ENCODE measurements at regions of chr1 and their contacts with region 1.

Region 1: DNA sequence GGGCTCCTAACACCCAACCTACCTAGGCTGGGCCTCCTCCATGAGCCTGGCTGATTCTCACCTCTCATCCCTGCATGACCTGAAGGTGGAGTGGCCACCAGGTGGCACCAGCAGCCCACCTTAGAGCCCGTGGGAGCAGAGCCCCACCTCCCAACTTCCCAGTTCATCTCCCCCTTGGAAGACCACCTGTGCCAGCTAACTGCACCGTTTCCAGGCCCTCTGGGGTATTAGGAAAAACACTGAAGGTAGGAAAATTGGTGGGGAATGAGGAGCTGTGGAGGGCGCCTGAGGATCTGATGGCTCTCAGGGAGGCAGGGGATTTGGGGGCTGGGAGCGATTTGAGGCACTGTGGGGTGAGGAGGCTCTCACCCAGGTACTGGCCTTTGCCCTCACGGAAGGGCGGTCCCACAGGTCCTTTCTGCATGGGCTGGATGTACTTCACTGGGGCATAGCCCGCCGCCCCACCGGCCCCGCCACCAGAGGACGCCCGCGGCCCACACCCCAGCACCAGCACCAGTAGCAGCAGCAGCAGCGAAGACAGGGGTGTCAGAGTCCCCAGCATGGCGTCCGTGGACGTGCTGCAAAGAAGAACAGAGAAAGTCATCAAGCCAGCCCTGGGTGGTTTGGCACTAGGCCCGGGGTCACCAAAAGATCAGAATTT is 11.1 kb downstream of the ADPRS start:
- DNase-seq: peak; percentile 67
- ATAC-seq: peak; percentile 86
- H3K4me3 Mint-ChIP-seq: no peak overlapping the region
- H3K27ac Mint-ChIP-seq: no peak overlapping the region
- H3K4me1 Mint-ChIP-seq: peaks cover 3% of the 10 kb centered on the region
- H3K27me3 Mint-ChIP-seq: no peaks in the 10 kb centered on the region
- CTCF ChIP-seq: no peak

Region 2: DNA sequence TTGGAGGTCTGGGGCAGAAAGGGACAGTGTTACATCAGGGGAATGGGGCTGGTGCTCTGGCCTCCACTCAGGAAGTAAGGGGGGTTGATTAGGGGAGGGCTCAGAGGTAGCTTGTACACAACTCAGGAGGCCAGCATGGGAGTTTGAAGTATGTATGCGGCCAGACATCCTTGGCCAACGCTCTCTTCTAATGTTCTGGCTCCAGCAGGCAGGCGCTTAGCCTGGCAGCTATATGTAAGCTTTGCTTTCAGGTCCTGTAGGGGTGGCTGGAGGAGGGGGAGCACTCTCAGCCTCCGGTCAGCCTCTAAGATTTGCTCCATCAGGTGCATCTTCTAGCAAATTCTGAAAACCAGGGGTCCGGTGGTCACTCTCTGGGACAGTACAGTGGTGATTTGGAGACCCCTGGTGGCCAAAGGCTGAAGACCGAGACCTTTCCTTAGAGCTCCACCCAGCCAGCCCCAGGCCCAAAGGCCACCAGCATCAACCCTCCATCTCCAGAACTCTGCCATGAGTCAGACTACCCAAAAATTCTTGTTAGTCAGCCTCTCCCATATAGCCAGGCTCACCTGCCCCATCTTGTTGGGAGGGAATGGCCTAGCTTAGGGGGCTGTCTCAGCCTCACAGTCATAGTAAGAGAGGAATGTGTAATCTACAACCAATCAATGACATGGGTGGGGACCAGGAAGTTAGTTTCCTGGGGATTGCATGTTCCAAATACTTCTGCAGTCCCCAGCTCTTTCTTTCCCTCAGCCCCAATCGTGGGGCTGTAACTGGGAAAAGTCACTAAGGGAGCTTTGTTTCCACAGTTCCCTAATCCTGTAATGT is 34.9 kb after region 1 on chr1:
- CTCF ChIA-PET with region 1: interaction called, 38 read pairs
- POLR2A ChIA-PET with region 1: no interaction called
- intact Hi-C with region 1: loop called (anchors 1 kb)
- DNase-seq: no peak
- ATAC-seq: peak; percentile 67
- H3K4me3 Mint-ChIP-seq: no peak overlapping the region
- H3K27ac Mint-ChIP-seq: no peak overlapping the region
- H3K4me1 Mint-ChIP-seq: no peaks in the 10 kb centered on the region
- H3K27me3 Mint-ChIP-seq: no peaks in the 10 kb centered on the region
- CTCF ChIP-seq: no peak

Region 3: GRCh38 chr1:36187800-36188593 is 88.2 kb after region 1 on chr1:
- CTCF ChIA-PET with region 1: interaction called, 13 read pairs
- POLR2A ChIA-PET with region 1: no interaction called
- intact Hi-C with region 1: loop called (anchors 1 kb)
- DNase-seq: peak; percentile 58
- ATAC-seq: peak; percentile 99
- H3K4me3 Mint-ChIP-seq: no peak overlapping the region
- H3K27ac Mint-ChIP-seq: no peak overlapping the region
- H3K4me1 Mint-ChIP-seq: peaks cover 3% of the 10 kb centered on the region
- H3K27me3 Mint-ChIP-seq: no peaks in the 10 kb centered on the region
- CTCF ChIP-seq: no peak

Region 4: DNA sequence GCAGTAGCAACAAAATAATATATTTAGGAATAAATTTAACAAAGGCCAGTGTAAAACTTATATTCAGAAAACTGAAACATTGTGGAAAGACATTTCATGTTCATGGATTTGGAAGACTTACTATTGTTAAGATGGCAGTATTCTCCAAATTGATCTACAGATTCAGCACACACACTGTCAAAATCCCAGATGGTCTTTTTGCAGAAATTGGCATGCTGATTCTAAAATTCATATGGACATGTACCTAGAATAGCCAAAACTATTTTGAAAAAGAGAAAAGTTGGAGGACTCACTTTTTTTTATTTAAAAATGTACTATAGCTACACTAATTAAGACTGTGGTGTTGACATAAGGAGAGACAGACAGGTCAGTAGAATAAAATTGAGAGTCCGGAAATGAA is 174.4 kb after region 1 on chr1:
- CTCF ChIA-PET with region 1: no interaction called
- POLR2A ChIA-PET with region 1: interaction called, 13 read pairs
- intact Hi-C with region 1: no loop called
- DNase-seq: no peak
- ATAC-seq: no peak
- H3K4me3 Mint-ChIP-seq: no peak overlapping the region
- H3K27ac Mint-ChIP-seq: no peak overlapping the region
- H3K4me1 Mint-ChIP-seq: peaks cover 15% of the 10 kb centered on the region
- H3K27me3 Mint-ChIP-seq: no peaks in the 10 kb centered on the region
- CTCF ChIP-seq: no peak

Region 5: DNA sequence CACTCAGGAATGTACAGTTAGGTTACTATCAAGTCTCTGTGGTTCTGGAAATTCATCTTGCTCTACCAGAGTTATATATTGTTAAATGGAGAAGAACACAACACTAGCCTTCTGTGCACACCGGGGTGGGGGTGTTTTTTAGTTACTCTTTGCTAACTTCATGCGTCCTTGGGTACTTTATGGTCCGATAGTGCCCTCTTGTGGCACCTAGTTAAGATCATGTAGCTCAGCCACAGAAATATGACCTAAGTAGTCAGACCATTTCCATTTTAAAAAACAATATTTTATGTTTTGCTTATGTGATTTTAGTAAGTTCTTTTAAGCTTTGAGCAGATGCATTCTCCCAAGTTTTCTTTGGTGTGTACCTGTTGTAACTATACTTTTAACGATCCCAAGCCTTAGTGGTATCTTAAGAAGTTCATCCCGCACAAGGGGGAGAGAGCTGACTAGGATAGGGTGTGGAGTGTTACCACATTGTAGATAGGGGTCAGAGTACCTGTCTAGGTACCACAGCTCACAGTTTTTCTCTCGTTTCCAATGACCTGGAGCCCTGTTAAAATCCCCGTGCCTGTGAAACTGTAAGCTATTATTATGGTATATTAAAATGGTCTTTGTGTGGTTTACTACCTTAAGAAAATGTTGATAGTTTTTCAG is 185.8 kb after region 1 on chr1:
- CTCF ChIA-PET with region 1: interaction called, 10 read pairs
- POLR2A ChIA-PET with region 1: interaction called, 4 read pairs
- intact Hi-C with region 1: loop called (anchors 1 kb)
- DNase-seq: no peak
- ATAC-seq: peak; percentile 92
- H3K4me3 Mint-ChIP-seq: no peak overlapping the region
- H3K27ac Mint-ChIP-seq: peak overlapping the region; percentile 59
- H3K4me1 Mint-ChIP-seq: peaks cover 11% of the 10 kb centered on the region
- H3K27me3 Mint-ChIP-seq: no peaks in the 10 kb centered on the region
- CTCF ChIP-seq: no peak

Region 6: DNA sequence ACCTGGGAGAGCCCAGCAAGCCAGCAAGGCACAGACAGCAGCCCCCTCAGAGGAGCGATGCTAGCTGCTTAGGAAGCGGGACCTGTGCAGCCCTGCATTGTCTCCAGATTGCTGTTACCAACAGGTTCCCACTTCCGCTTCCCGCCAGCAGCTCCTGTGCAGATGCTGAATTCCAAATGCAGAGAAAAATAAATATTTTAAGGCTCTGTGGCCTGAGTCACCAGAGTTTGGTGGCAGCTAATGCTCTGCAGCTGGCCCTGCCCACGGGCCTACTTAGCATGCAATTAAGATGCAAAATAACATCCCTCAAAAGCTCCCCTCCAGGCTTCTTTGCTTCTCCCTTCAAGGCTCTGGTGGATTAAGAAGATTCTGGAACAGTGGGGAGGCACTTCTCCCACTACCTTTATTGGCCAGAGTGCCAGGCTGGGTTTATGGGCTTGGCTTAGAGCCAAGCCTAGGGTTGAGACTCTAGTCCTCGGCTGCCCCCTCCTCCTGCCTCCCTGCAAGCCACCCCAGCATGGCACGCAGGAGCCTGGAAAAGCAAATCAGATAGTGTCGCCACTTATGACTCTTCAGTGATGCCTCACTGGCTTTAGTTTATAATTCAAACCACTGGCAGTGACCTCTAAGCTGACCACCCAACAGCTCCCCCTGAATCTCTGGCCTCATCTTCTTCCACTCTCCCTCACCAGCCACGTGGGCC is 1167.5 kb after region 1 on chr1:
- CTCF ChIA-PET with region 1: no interaction called
- POLR2A ChIA-PET with region 1: no interaction called
- intact Hi-C with region 1: no loop called
- DNase-seq: no peak
- ATAC-seq: no peak
- H3K4me3 Mint-ChIP-seq: no peak overlapping the region
- H3K27ac Mint-ChIP-seq: no peak overlapping the region
- H3K4me1 Mint-ChIP-seq: peaks cover 3% of the 10 kb centered on the region
- H3K27me3 Mint-ChIP-seq: peaks cover 9% of the 10 kb centered on the region
- CTCF ChIP-seq: no peak

Measured in activated B cell treated with CpG ODN at 0.5 μM for 24 hours (primary cell).